T-cell (primary cell): ENCODE measurements at regions of chr10 and their contacts with region 1.

Region 1: DNA sequence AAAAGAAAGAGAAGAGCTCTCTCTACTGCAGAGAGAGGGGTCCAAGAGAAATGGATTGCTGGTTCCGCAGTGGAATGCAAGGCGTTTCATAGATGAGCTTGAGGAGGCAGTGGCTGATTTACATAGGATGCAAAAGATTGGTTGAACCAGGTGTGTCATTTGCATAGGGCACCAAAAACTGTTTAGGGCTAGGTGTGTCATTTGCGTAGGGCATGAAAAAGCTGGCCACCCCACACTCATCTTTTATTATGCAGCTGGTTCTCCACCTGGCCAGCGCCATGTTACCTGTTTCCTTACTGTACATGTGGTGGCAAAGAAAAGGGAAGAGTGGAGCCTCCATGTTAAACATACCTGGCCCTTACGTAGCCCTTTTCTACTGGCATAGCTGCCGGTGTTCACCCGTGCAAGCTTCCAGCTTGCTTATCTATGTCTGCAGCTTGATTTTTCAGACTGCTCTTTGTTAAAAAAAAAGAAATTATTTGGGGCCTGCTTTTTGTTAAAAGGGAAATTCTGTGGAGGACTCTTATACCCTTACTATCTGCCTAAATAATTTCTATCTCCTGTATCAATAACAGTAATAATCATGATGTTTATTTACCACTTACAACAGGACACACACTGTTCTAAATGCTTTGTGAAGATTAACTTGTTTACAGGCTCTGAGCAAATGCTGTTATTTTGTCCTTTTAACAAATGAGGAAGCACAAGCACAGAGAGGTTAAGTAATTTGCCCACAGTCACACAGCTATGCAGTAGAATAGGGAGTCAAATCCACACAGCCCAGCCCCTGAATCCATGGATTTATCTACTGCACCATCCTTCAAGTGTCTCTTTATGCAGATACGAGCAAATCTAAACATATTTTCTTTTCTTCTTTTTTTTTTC is 33.3 kb downstream of the CASP7 start:
- DNase-seq: no peak
- ATAC-seq: no peak
- H3K4me3 ChIP-seq: no peak overlapping the region
- H3K4me3 Mint-ChIP-seq: no peak overlapping the region
- H3K27ac ChIP-seq: no peak overlapping the region
- H3K27ac Mint-ChIP-seq: no peak overlapping the region
- H3K4me1 ChIP-seq: peaks cover 0 to 4% of the 10 kb centered on the region in 2 experiments
- H3K4me1 Mint-ChIP-seq: peaks cover 19 to 23% (median 23%) of the 10 kb centered on the region in 3 donors
- H3K27me3 ChIP-seq: no peaks in the 10 kb centered on the region
- H3K27me3 Mint-ChIP-seq: no peaks in the 10 kb centered on the region

Region 2: GRCh38 chr10:112546474-112546873 is 1166.5 kb before region 1 on chr10:
- CTCF ChIA-PET with region 1: no interaction called
- POLR2A ChIA-PET with region 1: interaction called in 1 of 2 experiments, 10 read pairs
- DNase-seq: no peak
- ATAC-seq: no peak
- H3K4me3 ChIP-seq: no peak overlapping the region
- H3K4me3 Mint-ChIP-seq: no peak overlapping the region
- H3K27ac ChIP-seq: no peak overlapping the region
- H3K27ac Mint-ChIP-seq: no peak overlapping the region
- H3K4me1 ChIP-seq: no peaks in the 10 kb centered on the region
- H3K4me1 Mint-ChIP-seq: peaks cover 0 to 6% (median 3%) of the 10 kb centered on the region in 3 donors
- H3K27me3 ChIP-seq: no peaks in the 10 kb centered on the region
- H3K27me3 Mint-ChIP-seq: no peaks in the 10 kb centered on the region

Region 3: DNA sequence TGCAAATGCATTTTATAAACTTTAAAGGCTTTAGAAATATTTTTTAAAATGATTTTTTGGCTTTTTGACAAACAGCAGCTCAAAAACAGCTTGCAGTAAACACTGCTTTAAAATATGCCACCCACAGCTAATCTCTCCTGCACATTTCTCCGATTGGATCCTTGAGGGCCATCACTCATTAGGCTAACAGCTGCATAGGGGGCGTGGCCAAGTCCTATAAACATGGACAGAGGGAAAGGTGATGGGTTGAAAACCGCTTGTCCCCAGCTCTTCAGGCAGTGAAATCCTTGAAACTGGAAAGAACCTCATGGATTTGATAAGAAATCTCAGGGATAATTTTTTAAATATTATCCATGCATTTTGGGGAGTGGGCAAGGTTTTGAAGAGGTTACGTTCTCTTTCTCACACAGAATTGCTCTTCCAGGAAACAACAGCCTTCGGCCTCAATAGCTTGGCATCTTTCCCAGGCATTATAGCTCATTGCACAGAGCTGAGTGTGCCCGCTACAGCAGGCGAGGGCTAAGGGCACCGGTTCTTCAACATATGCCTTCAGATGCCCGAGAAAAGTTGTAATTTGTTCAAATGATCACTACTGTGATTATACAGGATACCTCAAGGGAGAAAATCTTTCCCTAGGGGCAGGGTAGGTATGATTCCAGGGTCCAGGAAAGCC is 40.2 kb after region 1 on chr10:
- CTCF ChIA-PET with region 1: no interaction called
- POLR2A ChIA-PET with region 1: no interaction called
- DNase-seq: no peak
- ATAC-seq: no peak
- H3K4me3 ChIP-seq: no peak overlapping the region
- H3K4me3 Mint-ChIP-seq: no peak overlapping the region
- H3K27ac ChIP-seq: no peak overlapping the region
- H3K27ac Mint-ChIP-seq: no peak overlapping the region
- H3K4me1 ChIP-seq: no peaks in the 10 kb centered on the region
- H3K4me1 Mint-ChIP-seq: no peaks in the 10 kb centered on the region
- H3K27me3 ChIP-seq: peaks cover 0 to 3% of the 10 kb centered on the region in 2 experiments
- H3K27me3 Mint-ChIP-seq: peaks cover 18 to 21% of the 10 kb centered on the region in 2 donors

Region 4: DNA sequence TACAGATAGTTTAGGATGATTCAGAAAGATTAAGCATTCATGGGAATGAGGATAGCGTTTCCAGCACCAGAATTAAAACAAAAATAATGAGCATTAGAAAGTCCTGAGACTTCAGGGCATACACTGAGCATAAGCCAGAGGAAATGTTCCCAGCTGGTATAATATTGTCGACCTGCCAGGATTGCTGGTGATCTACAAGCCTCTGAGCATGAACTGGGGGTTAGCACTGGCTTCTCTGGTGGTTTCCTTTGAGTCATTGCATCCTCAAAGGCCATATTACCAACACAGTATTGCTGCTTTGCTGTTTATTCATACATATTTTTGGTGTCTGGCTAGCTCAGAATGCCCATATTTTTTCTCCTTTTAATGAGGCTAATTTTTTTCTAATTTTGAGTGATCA is 1369.5 kb after region 1 on chr10:
- CTCF ChIA-PET with region 1: no interaction called
- POLR2A ChIA-PET with region 1: no interaction called
- DNase-seq: no peak
- ATAC-seq: no peak
- H3K4me3 ChIP-seq: no peak overlapping the region
- H3K4me3 Mint-ChIP-seq: no peak overlapping the region
- H3K27ac ChIP-seq: no peak overlapping the region
- H3K27ac Mint-ChIP-seq: no peak overlapping the region
- H3K4me1 ChIP-seq: no peaks in the 10 kb centered on the region
- H3K4me1 Mint-ChIP-seq: no peaks in the 10 kb centered on the region
- H3K27me3 ChIP-seq: peaks cover 0 to 3% of the 10 kb centered on the region in 2 experiments
- H3K27me3 Mint-ChIP-seq: peaks cover 15 to 34% of the 10 kb centered on the region in 2 donors